Activated naive CD4-positive, alpha-beta T cell treated with anti-CD3 and anti-CD28 coated beads for 36 hours (primary cell): ENCODE measurements at regions of chr1 and their contacts with region 1.

Region 1: GRCh38 chr1:112715264-112716053 is at the start of gene PPM1J:
- DNase-seq: peak; percentile 95
- H3K4me3 Mint-ChIP-seq: peak within 1 kb of the TSS; percentile 78
- H3K27ac Mint-ChIP-seq: no peak within 1 kb of the TSS
- H3K4me1 Mint-ChIP-seq: peaks cover 24% of the 10 kb centered on the region
- H3K27me3 Mint-ChIP-seq: peaks cover 24% of the 10 kb centered on the region
- total RNA-seq, gene PPM1J: 0.74 to 1.0 TPM

Region 2: DNA sequence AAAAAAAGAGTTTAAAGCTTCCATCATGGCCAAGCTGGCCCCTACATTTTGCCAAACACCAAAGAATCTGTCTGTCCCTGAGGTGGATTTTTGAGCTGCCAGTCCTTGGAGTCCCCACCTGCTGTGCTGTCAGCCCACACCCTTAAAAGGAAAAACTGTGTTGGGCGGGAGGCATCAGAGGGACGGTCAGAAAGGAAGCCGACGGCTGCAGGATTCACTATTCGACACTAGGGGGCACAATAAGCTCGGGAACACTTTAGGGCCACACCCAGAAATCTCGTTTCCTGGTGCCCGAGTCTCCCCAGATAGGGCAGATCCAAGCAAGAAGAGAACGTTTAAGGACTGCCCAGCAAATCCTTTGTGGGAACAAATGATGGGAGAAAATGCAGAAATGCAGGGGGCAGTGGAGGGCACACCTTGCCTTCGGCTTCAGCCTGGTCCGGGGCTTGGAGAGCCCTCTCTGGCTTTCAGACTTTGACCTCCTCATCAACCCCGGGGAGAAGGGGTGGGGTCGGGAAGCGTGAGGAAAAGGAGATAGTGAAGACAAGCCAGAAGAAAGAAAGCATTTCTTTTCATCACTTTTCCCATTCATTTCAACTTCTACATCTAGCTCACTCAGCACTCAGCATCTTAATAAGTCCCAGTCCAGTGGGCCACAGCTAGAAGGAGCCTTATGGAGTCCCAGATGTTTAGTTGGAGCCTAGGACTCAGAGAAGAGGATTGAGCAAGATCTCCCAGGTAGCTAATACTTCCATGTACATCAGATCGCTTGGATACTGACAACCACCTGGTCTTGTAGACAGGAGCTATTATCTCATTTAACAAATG is 324.5 kb before region 1 on chr1:
- CTCF ChIA-PET with region 1: interaction called, 23 read pairs
- intact Hi-C with region 1: loop called (anchors 1 kb)
- DNase-seq: peak; percentile 90
- H3K4me3 Mint-ChIP-seq: peak overlapping the region; percentile 45
- H3K27ac Mint-ChIP-seq: no peak overlapping the region
- H3K4me1 Mint-ChIP-seq: peaks cover 18% of the 10 kb centered on the region
- H3K27me3 Mint-ChIP-seq: peaks cover 14% of the 10 kb centered on the region

Region 3: GRCh38 chr1:112744009-112744578 is 28.6 kb after region 1 on chr1:
- CTCF ChIA-PET with region 1: interaction called, 69 read pairs
- intact Hi-C with region 1: no loop called
- DNase-seq: no peak
- H3K4me3 Mint-ChIP-seq: no peak overlapping the region
- H3K27ac Mint-ChIP-seq: no peak overlapping the region
- H3K4me1 Mint-ChIP-seq: peaks cover 7% of the 10 kb centered on the region
- H3K27me3 Mint-ChIP-seq: peaks cover 73% of the 10 kb centered on the region

Region 4: DNA sequence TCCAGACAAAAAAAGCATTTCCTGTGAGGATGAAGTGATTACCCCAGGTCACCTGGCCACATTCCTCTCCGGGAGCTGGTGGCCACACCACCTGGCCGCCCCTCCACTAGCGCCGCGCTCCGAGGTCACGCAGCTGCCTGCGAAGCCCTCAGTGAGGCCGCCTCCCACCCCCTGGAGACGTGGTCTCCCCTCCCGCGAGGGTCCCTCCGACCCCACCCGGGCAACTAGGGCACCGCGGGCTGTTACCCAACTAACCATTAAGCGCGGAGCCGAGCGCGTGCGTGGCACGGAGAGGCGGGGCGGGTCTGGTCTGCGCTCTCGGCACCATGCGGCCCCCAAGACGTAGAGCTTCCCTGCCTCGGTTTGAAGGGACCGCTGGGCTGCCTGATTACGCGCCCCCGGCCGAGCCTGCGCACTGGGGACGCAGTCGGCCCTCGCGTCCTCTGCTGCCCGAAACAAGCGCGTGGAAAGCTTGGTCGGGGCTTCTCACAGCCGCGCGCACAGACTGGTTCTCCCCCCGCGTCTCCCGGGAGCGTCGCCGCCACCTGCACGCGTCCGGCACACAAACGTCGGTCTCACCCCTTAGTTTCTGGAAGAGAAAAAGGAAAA is 134.1 kb after region 1 on chr1:
- CTCF ChIA-PET with region 1: no interaction called
- intact Hi-C with region 1: no loop called
- DNase-seq: peak; percentile 7
- H3K4me3 Mint-ChIP-seq: peak overlapping the region; percentile 55
- H3K27ac Mint-ChIP-seq: no peak overlapping the region
- H3K4me1 Mint-ChIP-seq: peaks cover 2% of the 10 kb centered on the region
- H3K27me3 Mint-ChIP-seq: peaks cover 41% of the 10 kb centered on the region

Region 5: DNA sequence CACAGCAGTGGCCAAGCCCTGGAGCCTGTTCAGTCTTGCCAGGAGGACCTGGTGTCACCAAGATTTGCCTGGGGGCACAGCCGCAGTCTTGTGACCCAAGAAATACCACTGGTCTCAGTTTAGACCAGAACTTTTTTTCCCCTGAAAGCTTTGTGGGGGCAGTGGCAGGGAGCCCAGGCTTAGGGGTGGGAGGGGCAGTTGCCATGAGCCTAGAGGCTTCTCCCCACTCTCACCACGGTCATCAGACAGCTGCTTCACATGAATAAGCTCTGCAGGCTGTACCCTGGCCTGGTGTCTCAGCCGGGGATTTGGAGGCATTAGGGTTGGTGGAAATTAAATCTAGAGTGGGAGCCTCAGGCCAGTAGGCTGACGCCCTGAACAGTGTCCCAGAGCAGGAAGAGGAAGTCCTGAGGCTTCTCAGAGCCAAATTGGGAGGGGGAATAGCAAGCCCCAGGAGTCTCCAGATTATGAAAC is 166.8 kb after region 1 on chr1:
- CTCF ChIA-PET with region 1: interaction called, 13 read pairs
- intact Hi-C with region 1: loop called (anchors 2 kb)
- DNase-seq: no peak
- H3K4me3 Mint-ChIP-seq: no peak overlapping the region
- H3K27ac Mint-ChIP-seq: no peak overlapping the region
- H3K4me1 Mint-ChIP-seq: no peaks in the 10 kb centered on the region
- H3K27me3 Mint-ChIP-seq: peaks cover 2% of the 10 kb centered on the region

Region 6: GRCh38 chr1:113133038-113133437 is 417.6 kb after region 1 on chr1:
- CTCF ChIA-PET with region 1: no interaction called
- intact Hi-C with region 1: loop called (anchors 5 kb)
- DNase-seq: peak; percentile 69
- H3K4me3 Mint-ChIP-seq: no peak overlapping the region
- H3K27ac Mint-ChIP-seq: peak overlapping the region; percentile 76
- H3K4me1 Mint-ChIP-seq: peaks cover 64% of the 10 kb centered on the region
- H3K27me3 Mint-ChIP-seq: no peaks in the 10 kb centered on the region

Region 7: GRCh38 chr1:113677250-113678158 is 962.0 kb after region 1 on chr1:
- CTCF ChIA-PET with region 1: no interaction called
- intact Hi-C with region 1: loop called (anchors 2 kb)
- DNase-seq: no peak
- H3K4me3 Mint-ChIP-seq: no peak overlapping the region
- H3K27ac Mint-ChIP-seq: no peak overlapping the region
- H3K4me1 Mint-ChIP-seq: no peaks in the 10 kb centered on the region
- H3K27me3 Mint-ChIP-seq: no peaks in the 10 kb centered on the region

Region 8: DNA sequence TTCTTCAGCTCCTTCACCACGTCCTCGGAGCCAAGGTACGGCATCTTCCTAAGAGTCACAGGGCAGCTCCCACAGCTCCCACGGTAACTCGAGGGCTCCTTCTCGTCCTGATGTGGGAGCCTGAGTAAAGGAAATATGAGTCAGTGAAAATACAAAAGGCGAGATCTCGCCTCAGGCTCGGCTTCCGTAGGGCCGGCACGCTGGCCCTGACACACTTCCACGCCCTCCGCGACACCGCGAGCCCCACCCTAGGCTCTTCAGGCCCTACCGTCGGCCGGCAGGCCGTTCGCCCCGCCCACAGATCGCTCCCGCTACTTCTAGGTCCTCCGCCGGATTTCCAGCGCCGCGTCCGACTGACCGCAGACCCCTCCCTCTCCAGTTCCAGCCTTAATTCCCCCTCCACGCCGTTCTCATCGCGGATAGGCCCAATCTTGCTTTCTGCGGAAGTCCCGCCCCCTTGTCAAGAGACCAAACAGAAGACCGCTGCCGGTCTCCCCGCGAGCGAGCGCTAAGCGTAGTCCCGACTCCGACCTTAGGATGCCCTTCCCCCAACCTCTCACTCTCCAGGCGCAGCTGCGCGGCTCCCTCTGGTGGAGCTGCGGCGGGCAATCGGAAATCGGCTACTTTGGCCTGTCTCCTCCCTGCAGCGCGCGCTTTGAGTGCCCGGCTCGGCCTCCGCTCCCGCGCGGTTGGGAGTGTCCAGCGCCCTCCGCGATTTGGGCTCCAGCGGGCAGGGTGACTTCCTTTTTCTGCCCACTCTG is 1189.4 kb after region 1 on chr1 and contains the starts of genes AP4B1 and DCLRE1B:
- CTCF ChIA-PET with region 1: no interaction called
- intact Hi-C with region 1: loop called (anchors 2 kb)
- DNase-seq: peak; percentile 99
- H3K4me3 Mint-ChIP-seq: peak within 1 kb of the TSS; percentile 99
- H3K27ac Mint-ChIP-seq: peak within 1 kb of the TSS; percentile 97
- H3K4me1 Mint-ChIP-seq: peaks cover 51% of the 10 kb centered on the region
- H3K27me3 Mint-ChIP-seq: no peaks in the 10 kb centered on the region
- total RNA-seq, gene AP4B1: 35.7 to 40.2 TPM
- total RNA-seq, gene DCLRE1B: 17.7 to 18.3 TPM